ENCODE measurements at regions of chr1 and their contacts with region 1.

Region 1: DNA sequence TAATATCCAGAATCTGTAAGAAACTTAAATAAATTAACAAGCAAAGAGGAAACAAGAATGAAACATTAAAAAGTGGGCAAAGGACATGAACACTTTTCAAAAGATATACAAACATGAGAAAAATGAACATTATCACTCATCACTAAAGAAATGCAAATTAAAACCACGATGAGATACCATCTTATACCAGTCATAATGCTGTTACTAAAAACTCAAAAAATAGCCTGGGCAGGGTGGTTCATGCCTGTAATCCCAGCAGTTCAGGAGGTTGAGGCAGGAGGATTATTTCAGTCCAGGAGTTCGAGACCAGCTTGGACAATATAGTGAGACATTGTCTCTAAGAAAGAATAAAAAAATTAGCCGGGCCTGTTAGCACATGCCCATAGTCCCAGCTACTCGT is 6.1 kb downstream of the ZNF124 start:
- DNase-seq: no peak
- H3K4me3 ChIP-seq: no peak overlapping the region
- H3K4me3 Mint-ChIP-seq: no peak overlapping the region
- H3K27ac ChIP-seq: no peak overlapping the region
- H3K27ac Mint-ChIP-seq: no peak overlapping the region
- H3K4me1 ChIP-seq: no peaks in the 10 kb centered on the region
- H3K4me1 Mint-ChIP-seq: peaks cover 11% of the 10 kb centered on the region
- H3K27me3 ChIP-seq: no peaks in the 10 kb centered on the region
- H3K27me3 Mint-ChIP-seq: no peaks in the 10 kb centered on the region
- CTCF ChIP-seq: no peak

Region 2: DNA sequence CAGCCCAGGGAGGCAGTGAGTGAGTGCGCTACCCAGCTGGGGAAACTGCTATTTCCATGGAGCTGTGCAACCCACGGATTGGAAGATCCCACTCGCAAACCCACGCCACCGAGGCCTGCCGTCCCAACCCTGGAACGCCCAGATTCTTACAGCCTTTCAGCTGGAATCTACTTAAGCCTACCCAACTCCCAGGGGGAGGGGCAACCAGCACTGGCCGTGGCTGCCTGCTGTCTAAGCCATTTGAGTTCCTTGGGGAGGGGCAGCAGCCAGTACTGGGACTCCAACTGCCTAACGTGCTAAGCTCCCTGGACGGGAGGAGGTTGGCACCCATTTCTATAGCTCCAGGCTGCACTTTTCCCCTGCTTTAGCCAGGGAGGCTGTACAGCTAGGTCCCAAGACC is 34.4 kb before region 1 on chr1:
- intact Hi-C with region 1: loop called (anchors 5 kb)
- DNase-seq: no peak
- H3K4me3 ChIP-seq: peak overlapping the region in 1 of 3 experiments; percentile 8
- H3K4me3 Mint-ChIP-seq: no peak overlapping the region
- H3K27ac ChIP-seq: no peak overlapping the region
- H3K27ac Mint-ChIP-seq: no peak overlapping the region
- H3K4me1 ChIP-seq: peaks cover 0 to 4% of the 10 kb centered on the region in 2 donors
- H3K4me1 Mint-ChIP-seq: peaks cover 6% of the 10 kb centered on the region
- H3K27me3 ChIP-seq: no peaks in the 10 kb centered on the region
- H3K27me3 Mint-ChIP-seq: no peaks in the 10 kb centered on the region
- CTCF ChIP-seq: no peak

Region 3: GRCh38 chr1:247228133-247228532 is 62.5 kb after region 1 on chr1:
- intact Hi-C with region 1: no loop called
- DNase-seq: no peak
- H3K4me3 ChIP-seq: no peak overlapping the region
- H3K4me3 Mint-ChIP-seq: no peak overlapping the region
- H3K27ac ChIP-seq: no peak overlapping the region
- H3K27ac Mint-ChIP-seq: no peak overlapping the region
- H3K4me1 ChIP-seq: no peaks in the 10 kb centered on the region
- H3K4me1 Mint-ChIP-seq: no peaks in the 10 kb centered on the region
- H3K27me3 ChIP-seq: no peaks in the 10 kb centered on the region
- H3K27me3 Mint-ChIP-seq: peaks cover 0 to 2% (median 1%) of the 10 kb centered on the region in 3 donors
- CTCF ChIP-seq: no peak

Measured in CD14-positive monocyte (primary cell).